ENCODE measurements at regions of chrX and their contacts with region 1.

Region 1: GRCh38 chrX:129637217-129638109 is 17.3 kb downstream of the APLN start:
- DNase-seq: peak; percentile 72
- H3K4me3 ChIP-seq: no peak overlapping the region
- H3K27ac ChIP-seq: no peak overlapping the region
- H3K4me1 ChIP-seq: peaks cover 4 to 14% of the 10 kb centered on the region in 2 experiments; a peak in 2 of 4 replicates
- H3K27me3 ChIP-seq: peaks cover 17% of the 10 kb centered on the region; the same call in 1 of the 2 replicates
- CTCF ChIP-seq: peak; percentile 98
- EP300 ChIP-seq: no peak
- RAD21 ChIP-seq: peak; percentile 89

Region 2: DNA sequence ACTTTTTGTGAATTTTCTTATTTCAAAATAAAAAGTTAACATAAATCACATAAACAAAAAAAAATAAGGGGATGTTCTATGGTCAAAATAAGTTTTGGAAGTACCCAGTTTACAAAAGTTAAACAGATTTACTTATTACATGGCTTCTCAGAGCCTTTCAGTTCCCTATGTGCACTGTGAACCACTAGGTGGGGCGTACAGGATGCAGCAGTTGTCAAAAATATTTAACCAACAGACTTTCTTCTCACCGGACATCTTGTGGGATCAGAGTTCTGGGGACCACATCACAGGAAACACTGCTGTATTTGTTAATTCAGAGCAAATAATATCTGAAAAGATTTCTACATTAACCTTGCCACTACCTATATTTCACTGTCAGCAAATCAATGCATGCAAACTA is 188.3 kb before region 1 on chrX:
- CTCF ChIA-PET with region 1: no interaction called
- POLR2A ChIA-PET with region 1: no interaction called
- DNase-seq: no peak
- H3K4me3 ChIP-seq: no peak overlapping the region
- H3K27ac ChIP-seq: no peak overlapping the region
- H3K4me1 ChIP-seq: no peaks in the 10 kb centered on the region
- H3K27me3 ChIP-seq: no peaks in the 10 kb centered on the region
- CTCF ChIP-seq: peak; percentile 30; the same call in 1 of the 2 replicates
- EP300 ChIP-seq: no peak
- RAD21 ChIP-seq: no peak

Region 3: DNA sequence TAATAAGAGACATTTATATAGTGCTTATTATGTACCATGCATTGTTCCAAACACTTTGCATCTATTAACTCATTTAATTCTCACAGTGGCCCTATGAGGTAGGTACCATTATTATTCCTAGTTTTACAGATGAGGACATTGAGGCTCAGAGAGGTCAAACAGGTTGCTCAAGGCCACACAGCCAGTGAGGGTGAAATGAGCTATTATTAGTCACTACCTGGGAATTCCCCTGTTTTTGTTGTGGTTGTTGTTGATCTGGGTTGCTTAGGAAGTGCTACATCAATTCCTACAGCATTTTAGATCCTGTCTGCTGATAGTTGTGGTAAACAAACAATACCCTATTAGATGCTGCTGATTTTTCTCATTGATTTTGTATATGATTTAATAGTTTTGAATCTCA is 23.9 kb before region 1 on chrX:
- CTCF ChIA-PET with region 1: interaction called, 25 read pairs
- POLR2A ChIA-PET with region 1: no interaction called
- DNase-seq: no peak
- H3K4me3 ChIP-seq: no peak overlapping the region
- H3K27ac ChIP-seq: no peak overlapping the region
- H3K4me1 ChIP-seq: no peaks in the 10 kb centered on the region
- H3K27me3 ChIP-seq: peaks cover 12% of the 10 kb centered on the region
- CTCF ChIP-seq: no peak
- EP300 ChIP-seq: no peak
- RAD21 ChIP-seq: no peak

Region 4: DNA sequence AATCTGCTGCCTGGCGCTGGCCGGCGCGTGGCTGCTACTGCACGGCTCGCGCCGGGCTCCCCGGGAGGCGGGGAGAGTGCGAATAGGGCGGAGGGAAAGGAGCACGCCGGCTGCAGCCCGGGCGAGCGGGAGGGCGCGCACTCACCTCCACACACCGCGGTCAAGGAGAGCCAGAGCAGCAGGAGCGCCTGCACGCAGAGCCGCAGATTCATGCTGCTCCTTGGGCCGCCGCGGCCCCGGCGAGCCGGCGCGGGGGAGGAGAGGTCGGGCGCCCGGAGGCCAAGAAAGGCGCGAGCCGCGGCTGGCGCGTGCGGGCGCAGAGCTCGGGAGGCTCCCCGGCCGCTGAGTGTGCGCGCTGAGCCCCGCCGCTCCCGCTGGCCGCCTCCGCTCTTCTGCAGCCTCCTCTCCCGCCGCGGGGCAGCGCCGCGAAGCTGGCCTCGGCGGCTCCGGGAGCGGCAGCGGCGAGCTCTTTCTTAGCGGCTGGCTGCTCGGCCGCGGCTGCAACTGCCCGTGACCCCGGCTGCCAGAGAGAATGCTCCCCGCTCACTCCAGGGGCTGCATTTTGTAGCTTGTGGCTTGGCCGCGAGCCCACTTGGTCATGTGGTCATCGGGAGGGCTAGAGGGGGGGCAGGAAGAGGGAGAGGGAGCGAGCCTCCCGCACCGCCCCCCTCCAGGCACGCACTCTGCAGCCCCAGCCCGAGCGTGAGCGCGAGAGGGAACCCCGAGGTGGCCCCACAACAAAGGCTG is 17.1 kb after region 1 on chrX and contains the start of gene APLN:
- CTCF ChIA-PET with region 1: interaction called, 109 read pairs
- POLR2A ChIA-PET with region 1: interaction called, 3 read pairs
- DNase-seq: peak; percentile 80
- H3K4me3 ChIP-seq: peak within 1 kb of the TSS; percentile 50 to 61
- H3K27ac ChIP-seq: peak within 1 kb of the TSS in 1 of 2 experiments; percentile 53; a peak in 1 of 4 replicates
- H3K4me1 ChIP-seq: peaks cover 0 to 48% of the 10 kb centered on the region in 2 experiments; a peak in 1 of 4 replicates
- H3K27me3 ChIP-seq: peaks cover 46% of the 10 kb centered on the region
- CTCF ChIP-seq: no peak
- EP300 ChIP-seq: peak in 1 of 2 experiments; percentile 10; a peak in 1 of 4 replicates
- RAD21 ChIP-seq: no peak
- polyA plus RNA-seq, gene APLN: 0.71 and 0.82 TPM in 2 replicates

Region 5: DNA sequence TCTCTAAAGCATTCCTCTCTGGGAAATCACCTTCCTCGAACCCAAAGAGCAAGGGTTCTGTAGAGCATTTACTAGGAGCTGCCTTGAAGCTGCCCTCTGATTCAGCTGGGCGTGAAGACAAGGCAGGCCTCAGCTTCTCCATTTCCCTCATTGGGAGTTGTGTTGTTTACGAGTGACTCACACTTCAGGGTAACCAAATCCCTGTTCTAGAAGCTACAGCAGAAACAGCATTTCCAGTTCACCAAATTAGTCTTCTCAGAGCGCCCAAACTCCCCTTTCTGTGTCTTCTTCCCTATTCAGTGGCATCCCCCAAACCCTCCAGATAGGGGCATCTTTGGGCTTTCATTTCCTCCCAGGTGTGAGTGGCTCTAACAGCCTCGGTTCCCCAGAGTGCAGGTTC is 100.5 kb after region 1 on chrX:
- CTCF ChIA-PET with region 1: interaction called, 20 read pairs
- POLR2A ChIA-PET with region 1: no interaction called
- DNase-seq: no peak
- H3K4me3 ChIP-seq: no peak overlapping the region
- H3K27ac ChIP-seq: peak overlapping the region in 1 of 2 experiments; percentile 86; a peak in 2 of 4 replicates
- H3K4me1 ChIP-seq: peaks cover 0 to 28% of the 10 kb centered on the region in 2 experiments; a peak in 1 of 4 replicates
- H3K27me3 ChIP-seq: peaks cover 8% of the 10 kb centered on the region
- CTCF ChIP-seq: no peak
- EP300 ChIP-seq: no peak
- RAD21 ChIP-seq: no peak

Region 6: DNA sequence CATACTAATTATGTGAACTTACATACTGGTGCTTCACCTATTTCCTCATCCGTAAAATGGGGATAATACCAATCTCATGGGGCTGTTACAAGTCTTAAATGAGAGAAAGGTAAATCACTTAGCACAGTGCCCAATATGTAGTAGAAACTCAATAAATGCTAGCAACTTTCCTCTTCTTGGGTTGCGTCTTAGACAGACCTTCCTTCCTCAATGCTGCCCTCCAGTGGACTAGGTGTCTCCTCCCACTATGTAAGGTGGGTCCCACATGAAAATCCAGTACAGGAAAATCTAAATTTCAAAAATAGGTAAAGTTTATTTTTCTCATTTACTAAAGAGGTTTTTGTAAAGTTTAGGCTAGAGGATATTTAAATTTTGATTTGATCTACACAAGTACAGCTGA is 185.7 kb after region 1 on chrX:
- CTCF ChIA-PET with region 1: interaction called, 11 read pairs
- POLR2A ChIA-PET with region 1: no interaction called
- DNase-seq: peak; percentile 52
- H3K4me3 ChIP-seq: no peak overlapping the region
- H3K27ac ChIP-seq: no peak overlapping the region
- H3K4me1 ChIP-seq: no peaks in the 10 kb centered on the region
- H3K27me3 ChIP-seq: no peaks in the 10 kb centered on the region
- CTCF ChIP-seq: peak; percentile 67
- EP300 ChIP-seq: no peak
- RAD21 ChIP-seq: peak; percentile 65

Region 7: DNA sequence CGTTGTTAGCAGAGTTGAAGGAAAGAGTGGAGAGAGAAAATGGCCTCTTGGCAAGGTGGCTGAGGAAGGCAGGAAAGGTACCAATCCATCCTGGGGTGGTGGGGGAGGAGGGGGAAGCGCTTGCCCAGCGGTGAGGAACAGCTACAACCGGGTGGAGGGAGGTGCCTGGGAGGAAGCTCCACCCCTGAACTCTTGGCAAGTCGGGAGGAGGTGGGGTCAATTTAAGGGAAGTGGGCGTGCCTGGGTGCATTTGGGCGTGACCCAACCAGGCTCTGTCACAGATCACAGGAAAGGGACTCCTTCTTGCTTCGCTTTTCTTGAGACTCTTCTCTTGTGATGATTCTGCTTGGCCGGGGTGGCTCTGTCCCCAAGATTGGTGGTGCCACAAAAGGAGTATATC is 386.7 kb after region 1 on chrX:
- CTCF ChIA-PET with region 1: no interaction called
- POLR2A ChIA-PET with region 1: no interaction called
- DNase-seq: peak; percentile 44
- H3K4me3 ChIP-seq: no peak overlapping the region
- H3K27ac ChIP-seq: no peak overlapping the region
- H3K4me1 ChIP-seq: no peaks in the 10 kb centered on the region
- H3K27me3 ChIP-seq: peaks cover 21% of the 10 kb centered on the region
- CTCF ChIP-seq: no peak
- EP300 ChIP-seq: no peak
- RAD21 ChIP-seq: no peak

Region 8: DNA sequence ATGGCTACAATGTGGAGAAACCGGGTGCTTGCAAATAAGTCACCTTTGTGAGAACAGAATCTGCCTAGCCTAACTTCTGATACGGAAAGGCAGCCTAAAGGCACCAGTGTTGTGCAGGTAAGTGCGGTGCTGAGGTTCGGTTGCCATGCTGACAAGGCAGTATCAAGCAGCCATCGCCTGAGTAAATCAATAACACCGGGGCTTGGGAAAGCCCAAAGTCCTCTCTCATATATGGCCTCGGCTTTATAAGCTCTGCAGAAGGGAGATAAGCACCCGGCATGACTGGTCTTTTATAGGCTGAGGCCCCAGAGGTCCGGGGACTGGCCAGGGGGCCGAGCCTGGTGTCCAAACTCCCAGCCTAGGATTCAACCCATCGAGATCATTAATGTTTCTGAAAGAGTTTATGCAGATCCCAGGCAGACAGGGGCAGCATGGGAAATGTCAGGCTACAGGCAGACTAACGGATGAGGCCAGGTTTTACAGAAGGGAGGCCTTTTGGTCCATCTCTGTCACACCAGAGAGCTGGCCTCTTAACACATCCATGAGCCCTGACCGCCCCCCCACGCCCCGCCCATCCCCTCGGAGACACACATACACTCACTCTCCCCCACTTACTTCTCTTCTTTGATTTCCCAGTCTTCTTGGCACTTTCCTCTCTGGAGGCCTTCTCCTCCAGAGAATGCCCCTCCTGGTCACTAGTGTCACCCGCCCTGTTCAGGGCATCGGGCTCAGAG is 434.3 kb after region 1 on chrX:
- CTCF ChIA-PET with region 1: no interaction called
- POLR2A ChIA-PET with region 1: no interaction called
- DNase-seq: no peak
- H3K4me3 ChIP-seq: no peak overlapping the region
- H3K27ac ChIP-seq: no peak overlapping the region
- H3K4me1 ChIP-seq: no peaks in the 10 kb centered on the region
- H3K27me3 ChIP-seq: no peaks in the 10 kb centered on the region; the same call in 1 of the 2 replicates
- CTCF ChIP-seq: no peak
- EP300 ChIP-seq: no peak
- RAD21 ChIP-seq: no peak